HEK293T (cell line): ENCODE measurements at regions of chr2 and their contacts with region 1.

Region 1: DNA sequence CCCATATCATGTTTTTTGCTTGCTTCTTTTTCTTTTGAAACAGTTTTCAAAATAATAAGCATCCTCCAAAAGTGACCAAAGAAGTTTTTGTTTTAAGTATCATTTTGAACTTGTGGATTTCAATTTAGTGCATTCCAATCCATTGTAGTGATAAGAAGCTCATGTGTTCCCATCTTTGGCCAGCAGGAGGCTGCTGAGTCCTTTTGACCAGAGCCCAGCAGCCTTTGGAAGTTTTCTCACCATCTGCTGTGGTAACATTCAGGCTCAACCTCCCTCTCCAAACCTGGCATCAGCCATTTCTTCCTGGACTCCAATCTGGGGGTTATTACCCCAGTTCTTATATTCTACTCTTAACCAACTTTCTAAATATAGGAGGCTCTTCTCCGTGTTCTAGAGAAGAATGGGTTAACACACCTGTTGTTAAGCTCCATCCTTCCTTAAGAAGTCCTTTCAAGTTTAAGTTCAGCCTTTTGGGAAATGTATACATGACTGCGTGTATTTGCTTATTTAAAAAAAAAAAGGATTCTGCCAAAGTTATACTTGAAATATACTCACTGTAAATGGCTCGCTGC is 39.0 kb upstream of the MAL start:
- DNase-seq: peak; percentile 73

Region 2: DNA sequence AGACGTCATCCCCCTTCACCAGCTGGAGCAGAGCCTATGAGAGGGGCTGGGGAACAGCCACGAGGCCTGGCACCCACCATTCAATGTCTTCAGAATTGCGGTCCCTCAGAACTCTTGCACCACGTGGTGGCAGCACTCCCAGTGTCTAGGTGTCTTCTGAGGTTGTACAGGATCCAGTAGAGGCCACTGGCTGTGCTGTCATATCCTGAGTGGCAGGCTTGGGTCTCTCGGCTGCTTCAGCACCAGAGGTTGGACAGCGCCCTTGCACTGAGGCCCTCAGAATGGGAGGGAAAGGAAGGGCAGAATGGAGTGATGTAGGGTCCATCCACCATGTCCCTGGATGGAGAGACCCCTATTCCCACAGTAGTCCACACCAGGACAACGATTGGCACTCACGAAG is 227.3 kb before region 1 on chr2:
- CTCF ChIA-PET with region 1: no interaction called
- POLR2A ChIA-PET with region 1: no interaction called
- DNase-seq: peak; percentile 33

Region 3: GRCh38 chr2:94996305-94997100 is 10.0 kb after region 1 on chr2:
- CTCF ChIA-PET with region 1: interaction called, 20 read pairs
- POLR2A ChIA-PET with region 1: no interaction called
- DNase-seq: no peak